ENCODE measurements at regions of chr11 and their contacts with region 1.

Region 1: DNA sequence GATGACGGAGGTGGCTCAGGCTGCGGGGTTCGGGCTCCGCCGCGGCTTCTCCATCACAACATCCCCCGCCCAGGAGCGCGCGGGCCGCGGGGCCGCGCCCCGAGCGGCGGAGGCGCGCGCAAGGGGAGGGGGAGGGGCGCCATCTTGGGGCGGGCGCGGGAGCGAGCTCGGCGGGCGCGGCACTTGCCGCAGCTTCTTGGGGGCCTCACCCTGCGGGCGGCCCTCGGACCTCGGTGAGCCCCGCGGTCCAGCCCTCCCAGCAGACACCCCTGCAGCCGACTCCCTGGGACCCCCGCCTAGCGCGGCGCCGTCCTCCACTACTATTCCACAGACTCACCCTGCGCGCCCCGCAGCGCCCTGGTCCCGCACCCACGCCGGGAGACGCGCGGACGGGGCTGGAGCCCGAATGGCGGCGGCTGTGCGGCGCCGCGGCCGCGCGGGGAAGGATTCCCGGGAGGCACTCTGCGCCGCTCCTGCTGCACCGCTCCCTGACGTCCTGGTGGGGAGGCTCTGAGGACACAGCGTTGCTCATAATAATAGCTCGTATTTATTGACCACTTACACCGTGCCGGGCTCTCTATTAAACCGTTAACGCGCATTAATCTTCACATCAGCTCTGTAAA is at the start of gene APBB1:
- DNase-seq: peak; percentile 68
- H3K4me3 Mint-ChIP-seq: peak within 1 kb of the TSS; percentile 72
- H3K27ac Mint-ChIP-seq: peak within 1 kb of the TSS; percentile 25
- H3K4me1 Mint-ChIP-seq: peaks cover 4% of the 10 kb centered on the region
- H3K27me3 Mint-ChIP-seq: peaks cover 31% of the 10 kb centered on the region
- total RNA-seq, gene APBB1: 31.0 and 33.0 TPM in 2 replicates

Region 2: DNA sequence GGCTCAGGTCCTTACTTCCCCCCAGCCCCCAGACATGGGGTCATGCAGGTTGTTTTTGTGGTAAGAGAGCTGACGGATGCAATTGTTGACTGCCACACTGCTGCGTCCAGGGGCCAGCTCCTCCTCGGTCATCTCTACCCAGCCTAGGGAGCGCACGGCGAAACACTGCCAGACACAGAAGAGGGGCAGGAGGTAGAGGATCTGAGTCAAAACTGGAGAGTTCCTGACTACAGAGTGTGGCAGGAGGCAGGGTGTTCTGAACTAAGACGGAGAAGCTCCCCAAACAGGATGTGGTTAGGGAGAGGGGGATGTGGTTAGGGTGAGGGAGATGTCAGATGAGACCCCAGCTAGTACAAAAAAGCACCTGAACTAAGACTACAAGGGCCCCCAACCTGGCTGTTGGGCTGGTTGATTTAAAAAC is 16.5 kb before region 1 on chr11:
- intact Hi-C with region 1: loop called (anchors 1 kb)
- DNase-seq: peak; percentile 78
- H3K4me3 Mint-ChIP-seq: peak overlapping the region; percentile 64
- H3K27ac Mint-ChIP-seq: peak overlapping the region; percentile 93
- H3K4me1 Mint-ChIP-seq: peaks cover 56% of the 10 kb centered on the region
- H3K27me3 Mint-ChIP-seq: no peaks in the 10 kb centered on the region

Region 3: DNA sequence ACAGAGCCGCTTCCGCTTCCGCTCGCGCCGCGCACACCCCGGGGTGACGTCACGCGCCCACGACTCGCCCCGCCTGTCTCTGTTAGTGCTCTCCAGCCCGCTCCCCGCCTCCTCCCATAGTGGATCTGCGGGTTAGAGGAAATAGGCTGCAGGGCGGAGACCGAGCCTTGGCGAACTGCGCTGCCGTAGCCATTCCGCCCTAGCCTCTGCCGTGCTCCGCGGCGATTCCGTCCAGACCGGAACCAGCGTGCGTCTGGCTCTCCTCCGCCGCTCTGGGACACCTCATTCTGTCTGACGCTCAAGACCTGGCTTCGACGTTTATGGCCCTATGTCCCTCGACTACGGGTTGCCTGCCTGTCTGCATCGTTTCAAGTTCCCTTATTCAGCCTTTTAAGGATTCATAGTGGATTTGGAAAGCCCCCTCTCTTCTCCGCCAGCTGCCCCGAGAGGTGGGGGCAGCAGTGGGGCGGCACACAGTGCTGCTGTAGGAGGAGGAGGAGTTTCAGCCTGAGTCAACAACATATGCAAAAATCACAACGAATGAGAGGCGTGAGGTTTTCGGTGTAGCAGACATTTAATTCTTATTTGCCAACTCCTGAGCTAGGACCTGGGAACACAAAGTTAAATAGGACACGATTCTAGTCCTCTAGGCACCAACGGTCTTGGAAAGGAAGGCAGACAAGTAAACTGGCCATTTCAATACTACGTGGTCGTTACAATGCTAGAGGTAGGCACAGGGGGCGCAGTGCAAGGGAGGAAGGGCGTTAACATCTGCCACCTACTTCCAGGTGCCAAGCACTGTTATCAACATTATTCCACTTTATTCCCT is 193.3 kb after region 1 on chr11 and contains the start of gene TAF10:
- intact Hi-C with region 1: loop called (anchors 10 kb)
- DNase-seq: peak; percentile 95
- H3K4me3 Mint-ChIP-seq: peak within 1 kb of the TSS; percentile 95
- H3K27ac Mint-ChIP-seq: peak within 1 kb of the TSS; percentile 83
- H3K4me1 Mint-ChIP-seq: peaks cover 30% of the 10 kb centered on the region
- H3K27me3 Mint-ChIP-seq: no peaks in the 10 kb centered on the region
- total RNA-seq, gene TAF10: 134 and 142 TPM in 2 replicates

Measured in activated T-helper 2 cell treated with anti-CD3 and anti-CD28 coated beads, Interferon-gamma antibody, Interleukin-2, Interleukin-4, amounts not matched to agents 10 μg/mL and 5 μg/mL and 100 μg/mL, durations not matched to agents 14 hours and 24 hours and 36 hours (primary cell).